ENCODE measurements at regions of chr3 and their contacts with region 1.

Region 1: GRCh38 chr3:50542177-50543034 is 25.1 kb downstream of the C3orf18 start:
- DNase-seq: peak; percentile 52 to 95 (median 82)

Region 2: GRCh38 chr3:50189274-50189673 is 353.1 kb before region 1 on chr3:
- intact Hi-C with region 1: no loop called
- DNase-seq: peak; percentile 57 to 96 (median 77)

Region 3: GRCh38 chr3:50350527-50351322 is 191.7 kb before region 1 on chr3 and contains the starts of genes CYB561D2 and NPRL2:
- intact Hi-C with region 1: loop called (anchors 1 kb)
- DNase-seq: peak; percentile 99 to 100 (median 99)

Region 4: DNA sequence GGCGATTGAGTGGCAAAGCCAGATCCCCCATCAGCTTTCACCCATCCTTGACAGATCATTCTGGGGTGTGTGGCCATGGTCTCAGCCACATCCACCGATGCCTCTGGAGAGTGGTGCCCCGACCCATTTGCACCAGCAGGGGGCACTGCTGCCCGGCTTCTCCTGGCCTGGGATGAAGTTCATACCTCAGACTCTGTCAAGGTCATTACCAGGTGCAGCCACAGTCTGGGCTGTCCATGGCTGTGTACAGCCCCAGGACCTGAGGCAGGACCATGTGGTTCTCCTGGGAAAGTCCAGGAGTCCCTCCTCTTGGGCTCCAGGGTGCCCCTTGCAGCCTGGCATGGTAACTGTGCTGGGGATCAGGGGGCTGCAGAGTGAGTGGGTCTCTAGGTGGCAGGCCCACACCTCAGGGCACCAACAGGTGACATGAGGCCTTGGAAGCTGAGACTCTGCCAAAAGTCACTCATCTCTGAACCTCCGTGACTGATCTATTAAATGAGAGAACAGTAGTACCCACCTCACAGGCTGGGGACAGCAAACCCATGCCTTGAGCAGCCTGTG is 106.2 kb before region 1 on chr3:
- intact Hi-C with region 1: loop called (anchors 2 kb)
- DNase-seq: peak; percentile 43 to 95 (median 66)

Measured in posterior cingulate gyrus (tissue), 11 donors.